Left cardiac atrium (tissue), 4 donors: ENCODE measurements at regions of chr5 and their contacts with region 1.

Region 1: DNA sequence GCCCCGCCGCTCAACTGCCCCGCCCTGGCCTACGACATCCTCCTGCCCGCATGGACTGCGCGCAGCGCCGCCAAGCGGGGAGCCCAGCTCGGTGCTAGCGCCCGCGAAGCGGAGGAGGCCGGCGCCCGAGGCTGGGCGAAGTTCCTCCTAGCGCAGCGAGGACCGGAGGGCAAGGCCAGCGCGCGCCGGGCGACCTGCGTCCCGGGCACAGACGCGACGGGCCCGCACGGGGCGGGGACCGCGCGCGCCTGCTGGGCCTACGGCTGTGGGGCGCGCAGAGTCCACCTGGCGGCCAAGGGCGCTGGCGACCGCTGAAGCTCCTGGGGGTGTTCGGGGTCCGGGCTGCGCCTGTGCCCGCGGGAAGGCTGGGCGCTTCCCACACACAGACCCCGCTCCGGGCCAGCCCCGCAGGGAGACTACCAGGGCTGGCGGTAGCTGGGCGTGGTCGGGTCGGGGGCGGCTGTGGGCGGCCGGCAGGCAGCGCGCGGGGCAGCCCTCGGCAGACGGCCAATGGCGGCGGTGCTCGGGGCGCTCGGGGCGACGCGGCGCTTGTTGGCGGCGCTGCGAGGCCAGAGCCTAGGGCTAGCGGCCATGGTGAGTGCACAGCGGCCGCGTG is at the start of gene PCBD2:
- DNase-seq: peak; percentile 94
- ATAC-seq: peak; percentile 94
- total RNA-seq, gene PCBD2: 17.3 to 18.8 TPM

Region 2: DNA sequence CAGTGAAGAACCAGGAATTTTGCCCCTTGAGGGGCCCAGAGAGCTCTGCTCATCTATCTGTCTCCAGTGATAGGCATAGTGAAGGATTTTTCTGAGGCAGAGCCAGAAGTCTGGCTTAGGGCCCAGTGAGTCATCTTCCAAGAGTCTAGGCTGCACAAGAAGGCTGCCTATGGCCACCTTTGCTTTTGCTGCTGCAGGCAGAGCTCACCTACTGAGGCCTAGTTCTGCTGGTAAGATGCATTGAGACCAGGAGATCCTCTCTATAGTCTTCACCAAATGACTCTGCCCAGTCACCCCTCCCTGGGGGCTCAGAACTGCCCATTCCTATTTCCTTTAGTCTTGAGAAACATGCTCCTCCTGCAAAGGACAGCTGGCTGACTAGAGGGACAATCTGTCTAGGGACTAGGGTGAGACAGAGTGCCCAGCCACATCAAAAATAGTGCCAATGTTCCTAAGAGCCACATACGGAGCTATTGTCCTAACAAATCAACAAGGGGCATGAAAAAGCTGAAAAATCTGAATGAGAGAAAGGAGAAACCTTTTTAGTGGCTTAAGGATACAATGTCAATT is 452.7 kb before region 1 on chr5:
- intact Hi-C with region 1: no loop called
- DNase-seq: peak; percentile 79
- ATAC-seq: peak; percentile 83 to 94

Region 3: GRCh38 chr5:134738133-134738962 is 166.4 kb before region 1 on chr5 and contains the start of gene CAMLG:
- intact Hi-C with region 1: loop called in 1 of 2 experiments (anchors 5 kb)
- DNase-seq: peak; percentile 99
- ATAC-seq: peak; percentile 100
- total RNA-seq, gene CAMLG: 19.8 to 21.4 TPM

Region 4: GRCh38 chr5:134845852-134846640 is 58.7 kb before region 1 on chr5 and contains the start of gene C5orf24:
- intact Hi-C with region 1: loop called in 1 of 2 experiments (anchors 2 kb)
- DNase-seq: peak; percentile 95
- ATAC-seq: peak; percentile 99
- total RNA-seq, gene C5orf24: 27.9 to 31.1 TPM

Region 5: GRCh38 chr5:134873987-134874830 is 30.5 kb before region 1 on chr5 and contains the start of gene TXNDC15:
- intact Hi-C with region 1: loop called in 1 of 2 experiments (anchors 2 kb)
- DNase-seq: peak; percentile 92
- ATAC-seq: peak; percentile 96 to 98
- total RNA-seq, gene TXNDC15: 56.3 to 69.2 TPM